Activated CD8-positive, alpha-beta T cell treated with anti-CD3 and anti-CD28 coated beads for 36 hours (primary cell): ENCODE measurements at regions of chr9 and their contacts with region 1.

Region 1: GRCh38 chr9:113026200-113026599 is 14.2 kb upstream of the ZNF883 start:
- DNase-seq: no peak
- ATAC-seq: no peak
- H3K4me3 Mint-ChIP-seq: no peak overlapping the region
- H3K27ac Mint-ChIP-seq: no peak overlapping the region
- H3K4me1 Mint-ChIP-seq: no peaks in the 10 kb centered on the region
- H3K27me3 Mint-ChIP-seq: peaks cover 3% of the 10 kb centered on the region
- CTCF ChIP-seq: no peak

Region 2: DNA sequence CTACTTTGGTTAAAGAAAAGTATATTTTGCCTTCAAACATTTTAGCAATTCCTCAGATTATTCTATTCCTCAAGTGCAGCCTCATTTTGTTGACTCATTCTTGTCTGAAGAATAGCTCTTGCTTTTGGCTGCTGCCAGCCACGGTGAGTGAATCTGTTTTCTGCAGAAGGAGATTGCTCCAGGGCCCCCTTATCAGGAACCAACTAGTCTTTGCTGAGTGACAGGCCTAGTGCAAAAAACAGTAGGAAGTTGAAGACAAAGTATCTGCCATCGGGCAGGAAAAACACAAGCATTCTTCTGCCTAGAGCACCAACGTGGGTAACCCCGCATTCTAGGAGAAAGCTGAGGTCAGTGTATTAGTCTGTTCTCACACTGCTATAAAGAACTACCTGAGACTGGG is 56.5 kb before region 1 on chr9:
- CTCF ChIA-PET with region 1: no interaction called
- POLR2A ChIA-PET with region 1: no interaction called
- intact Hi-C with region 1: loop called (anchors 5 kb)
- DNase-seq: no peak
- ATAC-seq: no peak
- H3K4me3 Mint-ChIP-seq: no peak overlapping the region
- H3K27ac Mint-ChIP-seq: no peak overlapping the region
- H3K4me1 Mint-ChIP-seq: no peaks in the 10 kb centered on the region
- H3K27me3 Mint-ChIP-seq: peaks cover 18% of the 10 kb centered on the region
- CTCF ChIP-seq: no peak